Mucosa of descending colon (tissue), 3 donors: ENCODE measurements at regions of chr1 and their contacts with region 1.

Region 1: GRCh38 chr1:9196129-9197040 is 38.2 kb upstream of the H6PD start:
- DNase-seq: peak in 2 of 3 donors; percentile 59 to 85
- ATAC-seq: peak; percentile 78
- H3K4me3 ChIP-seq: no peak overlapping the region
- H3K4me1 ChIP-seq: no peaks in the 10 kb centered on the region
- CTCF ChIP-seq: peak; percentile 71

Region 2: GRCh38 chr1:8903908-8904650 is 292.3 kb before region 1 on chr1:
- intact Hi-C with region 1: no loop called
- DNase-seq: no peak
- ATAC-seq: no peak
- H3K4me3 ChIP-seq: no peak overlapping the region
- H3K4me1 ChIP-seq: no peaks in the 10 kb centered on the region
- CTCF ChIP-seq: no peak

Region 3: GRCh38 chr1:9110669-9111356 is 85.6 kb before region 1 on chr1:
- intact Hi-C with region 1: loop called (anchors 2 to 10 kb)
- DNase-seq: peak; percentile 86 to 94 (median 90)
- ATAC-seq: peak; percentile 80
- H3K4me3 ChIP-seq: no peak overlapping the region
- H3K4me1 ChIP-seq: peaks cover 5% of the 10 kb centered on the region
- CTCF ChIP-seq: peak; percentile 88

Region 4: GRCh38 chr1:9275567-9276034 is 79.2 kb after region 1 on chr1:
- intact Hi-C with region 1: no loop called
- DNase-seq: peak; percentile 56 to 78 (median 57)
- ATAC-seq: peak; percentile 59
- H3K4me3 ChIP-seq: no peak overlapping the region
- H3K4me1 ChIP-seq: peaks cover 8% of the 10 kb centered on the region
- CTCF ChIP-seq: no peak